HEK293 (cell line): ENCODE measurements at regions of chr12 and their contacts with region 1.

Region 1: GRCh38 chr12:110100315-110100970 is 23.7 kb upstream of the IFT81 start:
- H3K4me3 ChIP-seq: no peak overlapping the region
- H3K27ac ChIP-seq: no peak overlapping the region
- H3K4me1 ChIP-seq: no peaks in the 10 kb centered on the region
- CTCF ChIP-seq: peak; percentile 70

Region 2: DNA sequence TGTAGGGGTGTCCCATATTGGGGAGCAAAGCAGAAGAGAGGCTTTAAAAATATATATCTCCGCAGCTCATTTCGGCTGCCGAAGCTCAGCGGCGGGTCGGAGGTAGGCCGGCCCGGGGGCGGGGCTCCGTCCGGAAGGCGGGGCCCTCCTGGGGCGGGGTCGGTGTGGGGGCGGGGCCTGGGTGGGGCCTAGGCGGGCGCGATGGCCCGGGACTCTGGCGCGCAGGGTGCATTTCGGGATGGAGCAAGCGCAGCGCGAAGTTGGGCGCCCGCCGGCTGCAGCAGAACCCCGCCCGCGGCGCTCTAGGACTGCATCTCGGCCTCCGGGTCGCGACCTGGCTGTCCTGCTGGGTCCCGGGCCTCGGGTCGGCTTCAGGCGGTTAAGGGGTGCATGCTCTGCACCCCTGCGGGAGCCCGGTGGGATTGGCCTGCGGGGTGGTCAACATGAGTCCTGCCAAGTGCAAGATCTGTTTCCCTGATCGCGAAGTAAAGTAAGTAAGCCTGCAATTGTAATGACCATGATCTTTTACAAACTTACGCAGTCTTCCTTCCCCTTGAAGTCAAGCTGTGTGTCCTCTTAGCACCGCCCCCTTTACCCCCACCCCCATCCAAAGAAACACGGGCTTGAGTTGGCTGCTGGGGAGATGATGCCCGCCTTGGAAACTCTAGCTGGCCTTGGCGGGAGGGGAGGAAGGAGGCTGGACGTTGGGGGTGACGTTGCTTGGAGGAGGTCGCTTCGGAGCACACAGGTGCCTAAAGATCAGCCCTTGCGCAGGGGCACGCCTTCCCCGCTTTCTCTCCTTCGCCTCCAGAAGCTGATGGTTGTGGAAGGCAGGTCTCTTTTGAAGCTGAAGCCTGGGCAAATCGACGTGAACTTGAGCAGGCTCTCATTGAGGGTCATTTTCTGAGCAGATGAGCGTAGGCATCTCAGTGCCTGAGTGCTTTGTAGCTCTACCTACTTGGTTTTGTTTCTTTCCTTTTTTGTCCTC is 945.7 kb before region 1 on chr12:
- CTCF ChIA-PET with region 1: no interaction called
- POLR2A ChIA-PET with region 1: no interaction called
- H3K4me3 ChIP-seq: peak overlapping the region; percentile 74
- H3K27ac ChIP-seq: peak overlapping the region; percentile 78; the same call in 1 of the 2 replicates
- H3K4me1 ChIP-seq: peaks cover 8% of the 10 kb centered on the region; the same call in 1 of the 2 replicates
- CTCF ChIP-seq: no peak

Region 3: GRCh38 chr12:110088936-110089335 is 11.5 kb before region 1 on chr12:
- CTCF ChIA-PET with region 1: interaction called, 11 read pairs
- POLR2A ChIA-PET with region 1: no interaction called
- H3K4me3 ChIP-seq: no peak overlapping the region
- H3K27ac ChIP-seq: no peak overlapping the region
- H3K4me1 ChIP-seq: no peaks in the 10 kb centered on the region
- CTCF ChIP-seq: no peak

Region 4: DNA sequence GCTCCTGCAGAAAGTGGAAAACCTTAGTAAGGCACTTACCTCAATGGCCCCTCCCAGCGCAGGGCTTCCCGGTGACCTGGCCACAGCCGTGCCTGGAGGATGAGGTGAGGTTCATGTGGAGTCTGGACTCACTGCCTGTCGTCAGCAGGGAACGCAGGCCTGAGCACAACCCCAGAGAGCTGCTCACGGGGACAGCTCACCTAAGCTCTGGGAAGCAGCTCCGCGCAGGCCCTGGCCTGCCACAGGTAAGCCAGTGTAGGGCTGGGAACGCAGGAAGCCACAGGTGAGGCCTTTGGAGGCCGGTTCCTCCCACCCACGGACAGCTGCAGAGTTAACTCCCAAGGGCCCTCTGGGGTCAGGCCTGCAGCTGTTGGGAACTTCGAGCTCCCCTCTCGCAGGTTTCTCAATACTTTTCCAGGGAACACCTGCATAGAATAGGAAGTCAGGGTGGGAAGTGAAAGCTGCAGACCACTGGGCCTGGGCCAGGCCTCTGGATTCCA is 270.3 kb after region 1 on chr12:
- CTCF ChIA-PET with region 1: no interaction called
- POLR2A ChIA-PET with region 1: no interaction called
- H3K4me3 ChIP-seq: no peak overlapping the region
- H3K27ac ChIP-seq: no peak overlapping the region
- H3K4me1 ChIP-seq: no peaks in the 10 kb centered on the region
- CTCF ChIP-seq: no peak